ENCODE measurements at regions of chr1 and their contacts with region 1.

Region 1: DNA sequence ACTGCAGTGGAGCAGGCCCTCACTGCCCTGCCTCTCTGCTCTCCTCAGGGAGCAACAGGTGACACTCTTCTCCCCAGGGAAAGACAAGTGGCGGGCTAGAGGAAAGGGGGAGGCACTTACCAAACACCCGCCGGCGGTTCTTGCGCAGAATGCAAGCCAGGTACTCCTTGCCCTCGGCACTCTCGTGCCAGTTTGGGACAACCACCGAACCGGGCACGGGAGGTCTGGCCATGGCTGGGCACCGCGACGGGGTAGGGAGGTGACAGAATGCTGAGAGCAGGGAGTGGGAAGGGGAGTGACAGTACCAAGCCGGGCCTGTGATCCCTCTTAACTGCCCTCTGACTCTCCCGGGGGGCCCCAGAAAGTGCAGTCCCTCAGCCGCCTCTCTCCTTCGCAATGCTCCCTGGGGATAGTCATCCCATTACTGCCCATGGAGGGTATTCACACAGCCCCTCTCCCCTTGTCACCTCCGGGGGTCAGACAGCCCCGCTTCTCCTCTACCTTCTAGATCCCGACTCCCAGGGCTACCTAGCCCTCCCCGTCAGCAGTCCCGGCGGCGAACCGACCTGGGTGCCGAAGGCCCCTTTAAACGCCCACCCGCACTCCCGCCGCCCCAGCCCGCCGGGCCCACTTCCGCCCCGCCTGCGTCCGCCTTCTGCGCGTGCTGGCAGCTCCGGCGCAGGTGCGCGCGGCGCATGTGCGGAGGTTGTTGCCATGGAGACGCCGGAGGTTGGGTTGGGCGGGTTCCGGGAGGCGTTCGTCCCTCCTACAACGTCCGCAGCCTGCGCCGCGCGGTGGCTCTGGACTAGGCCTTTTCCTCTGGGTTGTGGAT is at the start of gene CPLANE2:
- DNase-seq: peak; percentile 65 to 93
- H3K4me3 ChIP-seq: peak within 1 kb of the TSS; percentile 81
- H3K27ac ChIP-seq: peak within 1 kb of the TSS; percentile 60
- H3K4me1 ChIP-seq: peaks cover 13% of the 10 kb centered on the region
- H3K27me3 ChIP-seq: no peaks in the 10 kb centered on the region
- CTCF ChIP-seq: 0 out of 2 replicates have a peak, but pooled peaks have one; percentile 29
- total RNA-seq, gene CPLANE2: 4.5 and 6.1 TPM in 2 replicates

Region 2: DNA sequence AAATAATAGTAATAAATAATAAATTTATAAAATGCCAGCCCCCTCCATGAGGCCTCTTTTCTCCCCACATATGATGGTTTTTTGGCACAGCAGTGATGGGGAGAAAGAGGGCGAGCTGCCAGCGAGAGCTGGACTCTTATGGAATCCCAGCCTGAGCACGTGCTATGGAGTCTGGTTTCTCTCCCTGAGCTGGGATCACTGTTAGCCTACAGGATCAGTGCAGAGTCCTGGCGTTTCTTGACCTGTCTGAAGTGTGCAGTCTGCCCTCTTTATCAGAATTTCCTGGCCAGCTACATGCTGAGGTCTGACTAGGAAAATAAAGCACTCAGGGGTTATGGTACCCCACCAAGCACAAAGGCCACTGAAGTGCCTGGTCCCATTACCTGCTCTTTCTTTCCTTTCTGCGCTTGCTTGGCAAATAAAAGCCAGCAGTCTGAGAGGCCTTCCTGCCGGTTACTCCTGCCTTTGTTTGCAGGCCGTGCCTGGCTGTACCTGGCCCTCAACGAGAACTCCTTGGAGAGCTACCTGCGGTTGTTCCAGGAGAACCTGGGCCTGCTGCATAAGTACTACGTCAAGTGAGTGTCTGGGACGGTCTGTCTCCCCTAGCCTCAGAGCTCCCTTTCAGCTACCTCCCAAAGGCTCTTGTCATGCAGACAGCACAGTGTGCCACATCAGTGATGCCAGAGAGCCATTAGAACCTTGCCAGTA is 519.2 kb before region 1 on chr1:
- CTCF ChIA-PET with region 1: no interaction called
- POLR2A ChIA-PET with region 1: no interaction called
- intact Hi-C with region 1: no loop called
- DNase-seq: no peak
- H3K4me3 ChIP-seq: no peak overlapping the region
- H3K27ac ChIP-seq: no peak overlapping the region
- H3K4me1 ChIP-seq: no peaks in the 10 kb centered on the region
- H3K27me3 ChIP-seq: no peaks in the 10 kb centered on the region
- CTCF ChIP-seq: no peak

Region 3: GRCh38 chr1:16078925-16079656 is 157.6 kb before region 1 on chr1:
- CTCF ChIA-PET with region 1: interaction called, 3 read pairs
- POLR2A ChIA-PET with region 1: interaction called, 3 read pairs
- intact Hi-C with region 1: loop called (anchors 2 kb)
- DNase-seq: peak; percentile 67 to 82
- H3K4me3 ChIP-seq: no peak overlapping the region
- H3K27ac ChIP-seq: peak overlapping the region; percentile 20; the same call in 1 of the 2 replicates
- H3K4me1 ChIP-seq: peaks cover 63% of the 10 kb centered on the region
- H3K27me3 ChIP-seq: no peaks in the 10 kb centered on the region
- CTCF ChIP-seq: peak; percentile 92

Region 4: GRCh38 chr1:16167331-16168143 is 69.2 kb before region 1 on chr1:
- CTCF ChIA-PET with region 1: no interaction called
- POLR2A ChIA-PET with region 1: no interaction called
- intact Hi-C with region 1: no loop called
- DNase-seq: peak; percentile 68 to 85
- H3K4me3 ChIP-seq: peak overlapping the region; percentile 80
- H3K27ac ChIP-seq: peak overlapping the region; percentile 75
- H3K4me1 ChIP-seq: peaks cover 66% of the 10 kb centered on the region
- H3K27me3 ChIP-seq: no peaks in the 10 kb centered on the region
- CTCF ChIP-seq: no peak

Region 5: DNA sequence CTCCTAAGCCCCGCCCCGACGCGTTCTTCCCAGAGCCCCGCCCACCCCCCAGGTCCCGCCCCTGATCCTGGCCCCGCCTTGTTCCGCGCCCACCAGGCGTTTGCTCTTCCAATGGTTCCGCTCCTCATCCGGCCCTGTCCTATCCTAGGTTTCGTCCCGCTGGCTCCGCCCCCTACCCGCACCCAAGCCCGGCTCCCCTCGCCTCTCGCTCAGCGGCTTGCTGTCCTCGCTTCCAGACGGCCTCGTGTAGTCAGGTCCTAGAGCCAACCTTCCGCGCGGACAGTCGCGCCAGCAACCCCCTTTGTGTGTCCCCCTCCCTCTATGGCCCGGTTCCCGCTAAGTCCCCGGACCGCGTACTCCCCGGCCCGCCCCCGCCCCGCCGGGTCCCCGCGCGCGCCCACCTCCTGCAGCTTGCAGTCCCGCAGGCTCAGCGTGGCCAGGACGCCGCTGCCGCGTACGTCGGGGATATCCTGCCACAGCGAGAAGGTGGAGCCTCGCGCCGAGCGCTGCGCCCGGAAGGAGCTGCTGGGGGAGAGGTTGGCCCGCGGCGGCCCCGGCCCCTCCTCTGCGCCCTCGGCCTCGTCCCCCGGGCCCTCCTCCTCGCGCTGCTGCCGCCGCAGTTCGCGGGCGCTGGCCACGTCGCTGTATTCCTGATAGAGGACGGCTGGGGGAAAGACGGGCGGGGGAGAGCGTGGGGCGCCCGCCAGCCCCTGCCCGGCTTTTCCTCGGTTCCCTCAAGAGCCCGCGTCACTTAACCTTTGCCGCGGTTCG is 30.0 kb before region 1 on chr1:
- CTCF ChIA-PET with region 1: no interaction called
- POLR2A ChIA-PET with region 1: no interaction called
- intact Hi-C with region 1: loop called (anchors 2 kb)
- DNase-seq: peak; percentile 89 to 97
- H3K4me3 ChIP-seq: peak overlapping the region; percentile 67
- H3K27ac ChIP-seq: peak overlapping the region; percentile 83
- H3K4me1 ChIP-seq: peaks cover 16% of the 10 kb centered on the region
- H3K27me3 ChIP-seq: no peaks in the 10 kb centered on the region
- CTCF ChIP-seq: no peak

Region 6: GRCh38 chr1:16217061-16217785 is 19.5 kb before region 1 on chr1:
- CTCF ChIA-PET with region 1: no interaction called
- POLR2A ChIA-PET with region 1: interaction called, 3 read pairs
- intact Hi-C with region 1: loop called (anchors 2 kb)
- DNase-seq: peak; percentile 83 to 98
- H3K4me3 ChIP-seq: peak overlapping the region; percentile 51; the same call in 1 of the 2 replicates
- H3K27ac ChIP-seq: no peak overlapping the region
- H3K4me1 ChIP-seq: peaks cover 17% of the 10 kb centered on the region
- H3K27me3 ChIP-seq: no peaks in the 10 kb centered on the region
- CTCF ChIP-seq: no peak